ENCODE measurements at regions of chr1 and their contacts with region 1.

Region 1: GRCh38 chr1:43227143-43227764 is 42.5 kb upstream of the TMEM125 start:
- DNase-seq: peak; percentile 89
- ATAC-seq: peak; percentile 94
- H3K4me3 ChIP-seq: no peak overlapping the region
- H3K27ac ChIP-seq: no peak overlapping the region
- H3K4me1 ChIP-seq: peaks cover 6% of the 10 kb centered on the region
- H3K27me3 ChIP-seq: no peaks in the 10 kb centered on the region
- CTCF ChIP-seq: peak; percentile 96

Region 2: GRCh38 chr1:42801832-42802473 is 425.3 kb before region 1 on chr1:
- CTCF ChIA-PET with region 1: no interaction called
- POLR2A ChIA-PET with region 1: no interaction called
- intact Hi-C with region 1: no loop called
- DNase-seq: no peak
- ATAC-seq: no peak
- H3K4me3 ChIP-seq: no peak overlapping the region
- H3K27ac ChIP-seq: no peak overlapping the region
- H3K4me1 ChIP-seq: no peaks in the 10 kb centered on the region
- H3K27me3 ChIP-seq: no peaks in the 10 kb centered on the region
- CTCF ChIP-seq: no peak

Region 3: DNA sequence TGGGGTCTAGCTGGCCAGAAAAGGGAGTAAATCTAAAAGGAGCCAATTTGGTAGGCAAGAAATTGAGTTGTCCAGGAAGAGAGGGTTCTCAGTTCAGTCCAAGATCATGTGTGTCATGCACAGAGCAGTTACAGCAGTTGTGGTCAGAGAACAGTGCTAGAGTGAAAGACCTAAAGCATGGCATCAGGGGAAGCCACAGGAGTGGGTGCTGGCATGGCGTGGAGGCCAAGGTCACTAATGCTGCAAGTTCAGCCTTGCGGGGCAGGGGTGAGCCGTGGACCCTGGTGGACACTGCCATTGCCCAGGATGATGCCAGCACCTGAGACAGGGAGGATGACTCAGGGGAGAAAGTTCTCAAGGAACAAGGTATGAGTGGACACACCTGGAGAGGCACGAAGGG is 25.9 kb after region 1 on chr1:
- CTCF ChIA-PET with region 1: no interaction called
- POLR2A ChIA-PET with region 1: no interaction called
- intact Hi-C with region 1: no loop called
- DNase-seq: no peak
- ATAC-seq: no peak
- H3K4me3 ChIP-seq: no peak overlapping the region
- H3K27ac ChIP-seq: no peak overlapping the region
- H3K4me1 ChIP-seq: no peaks in the 10 kb centered on the region
- H3K27me3 ChIP-seq: no peaks in the 10 kb centered on the region
- CTCF ChIP-seq: no peak

Region 4: DNA sequence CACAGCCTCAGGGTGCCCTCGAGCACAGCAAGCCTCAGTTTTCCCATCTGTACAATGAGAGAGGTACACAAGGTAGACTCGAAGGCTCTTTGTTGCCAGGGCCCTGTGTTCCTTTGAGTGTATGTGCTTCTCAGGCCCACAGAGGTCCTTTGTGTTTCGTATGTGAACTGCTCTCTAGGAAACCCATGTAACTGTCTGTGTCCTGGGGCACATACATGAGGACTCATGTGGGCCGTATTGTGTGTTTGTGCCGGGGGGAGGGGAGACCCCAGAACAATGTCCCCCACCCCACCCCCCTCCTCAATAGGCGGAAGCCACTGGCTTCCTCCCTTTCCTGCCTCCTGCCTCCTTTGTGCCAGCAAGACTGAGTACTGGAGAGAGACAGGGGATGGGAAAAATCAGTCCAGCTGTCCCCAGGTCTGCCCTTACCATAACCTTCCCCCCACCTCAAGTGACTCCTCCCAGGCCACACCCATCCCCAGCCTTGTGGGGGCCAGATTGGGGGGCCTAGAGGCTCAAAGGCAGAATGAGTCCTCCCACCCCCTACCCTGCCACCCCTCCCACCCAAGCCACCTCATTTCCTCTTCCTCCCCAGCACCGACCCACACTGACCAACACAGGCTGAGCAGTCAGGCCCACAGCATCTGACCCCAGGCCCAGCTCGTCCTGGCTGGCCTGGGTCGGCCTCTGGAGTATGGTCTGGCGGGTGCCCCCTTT is 73.3 kb after region 1 on chr1 and contains the start of gene TIE1:
- CTCF ChIA-PET with region 1: no interaction called
- POLR2A ChIA-PET with region 1: no interaction called
- intact Hi-C with region 1: no loop called
- DNase-seq: no peak
- ATAC-seq: no peak
- H3K4me3 ChIP-seq: no peak within 1 kb of the TSS
- H3K27ac ChIP-seq: no peak within 1 kb of the TSS
- H3K4me1 ChIP-seq: peaks cover under 1% of the 10 kb centered on the region; the same call in 1 of the 2 replicates
- H3K27me3 ChIP-seq: no peaks in the 10 kb centered on the region
- CTCF ChIP-seq: no peak
- total RNA-seq, gene TIE1: 1.5 and 1.8 TPM in 2 replicates

Region 5: DNA sequence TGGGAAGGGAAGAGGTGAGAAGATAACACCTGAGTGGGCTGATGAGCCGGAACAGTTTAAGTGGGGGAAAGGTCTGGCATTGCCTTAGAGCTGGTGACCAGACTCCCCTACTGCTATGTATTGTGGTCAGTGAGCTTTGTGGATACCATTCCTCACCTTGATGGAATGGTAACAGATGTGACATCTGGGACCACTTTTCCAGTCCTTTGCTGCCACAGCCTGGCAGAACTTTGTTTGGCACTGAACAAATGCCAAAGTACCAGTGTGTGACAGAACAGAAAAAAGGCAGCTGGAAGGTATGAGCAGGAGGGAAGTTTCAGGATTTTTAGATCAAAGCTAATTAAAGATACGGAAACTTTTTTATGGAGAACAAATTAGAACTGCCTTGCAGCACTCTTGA is 156.2 kb after region 1 on chr1:
- CTCF ChIA-PET with region 1: interaction called, 4 read pairs
- POLR2A ChIA-PET with region 1: no interaction called
- intact Hi-C with region 1: loop called (anchors 2 kb)
- DNase-seq: peak; percentile 60
- ATAC-seq: peak; percentile 53
- H3K4me3 ChIP-seq: no peak overlapping the region
- H3K27ac ChIP-seq: no peak overlapping the region
- H3K4me1 ChIP-seq: peaks cover 9% of the 10 kb centered on the region
- H3K27me3 ChIP-seq: no peaks in the 10 kb centered on the region
- CTCF ChIP-seq: peak; percentile 61

Region 6: GRCh38 chr1:43396059-43396458 is 168.8 kb after region 1 on chr1:
- CTCF ChIA-PET with region 1: interaction called, 15 read pairs
- POLR2A ChIA-PET with region 1: no interaction called
- intact Hi-C with region 1: loop called (anchors 5 kb)
- DNase-seq: peak; percentile 71
- ATAC-seq: peak; percentile 87
- H3K4me3 ChIP-seq: peak overlapping the region; percentile 5; the same call in 1 of the 2 replicates
- H3K27ac ChIP-seq: peak overlapping the region; percentile 61
- H3K4me1 ChIP-seq: peaks cover 22% of the 10 kb centered on the region
- H3K27me3 ChIP-seq: no peaks in the 10 kb centered on the region
- CTCF ChIP-seq: no peak

Region 7: GRCh38 chr1:43402089-43402865 is 175.0 kb after region 1 on chr1:
- CTCF ChIA-PET with region 1: interaction called, 15 read pairs
- POLR2A ChIA-PET with region 1: no interaction called
- intact Hi-C with region 1: loop called (anchors 5 kb)
- DNase-seq: no peak
- ATAC-seq: no peak
- H3K4me3 ChIP-seq: no peak overlapping the region
- H3K27ac ChIP-seq: no peak overlapping the region
- H3K4me1 ChIP-seq: no peaks in the 10 kb centered on the region
- H3K27me3 ChIP-seq: no peaks in the 10 kb centered on the region
- CTCF ChIP-seq: no peak

Region 8: GRCh38 chr1:43414634-43415223 is 187.5 kb after region 1 on chr1:
- CTCF ChIA-PET with region 1: interaction called, 23 read pairs
- POLR2A ChIA-PET with region 1: no interaction called
- intact Hi-C with region 1: loop called (anchors 1 kb)
- DNase-seq: peak; percentile 75
- ATAC-seq: peak; percentile 93
- H3K4me3 ChIP-seq: no peak overlapping the region
- H3K27ac ChIP-seq: no peak overlapping the region
- H3K4me1 ChIP-seq: no peaks in the 10 kb centered on the region
- H3K27me3 ChIP-seq: no peaks in the 10 kb centered on the region
- CTCF ChIP-seq: peak; percentile 83